Mammary epithelial cell (primary cell): ENCODE measurements at regions of chr2 and their contacts with region 1.

Region 1: DNA sequence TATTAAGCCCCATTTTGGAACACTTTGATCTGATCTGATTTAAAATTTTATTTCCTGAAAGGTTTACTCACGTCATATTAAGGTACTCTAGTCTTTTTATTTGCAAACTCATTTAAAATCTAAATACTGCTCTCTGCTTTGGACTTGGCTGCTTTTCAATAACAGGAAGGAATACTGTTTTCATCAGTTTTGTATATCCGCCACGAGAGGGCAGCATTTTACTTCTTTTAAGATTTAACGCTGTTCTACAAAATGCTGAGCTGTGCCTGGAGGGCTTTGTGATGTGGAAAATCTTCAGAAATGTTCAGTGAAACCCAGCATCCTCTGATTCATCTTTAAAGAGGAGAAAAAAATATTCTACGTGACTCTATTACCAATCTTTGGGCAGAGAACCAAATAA is 37.5 kb upstream of the SLC38A11 start:
- DNase-seq: peak; percentile 87
- H3K4me3 ChIP-seq: no peak overlapping the region
- H3K27ac ChIP-seq: peak overlapping the region; percentile 91
- H3K4me1 ChIP-seq: peaks cover 31% of the 10 kb centered on the region
- H3K27me3 ChIP-seq: no peaks in the 10 kb centered on the region
- CTCF ChIP-seq: peak; percentile 21 to 39

Region 2: GRCh38 chr2:164737612-164738081 is 255.2 kb before region 1 on chr2:
- CTCF ChIA-PET with region 1: no interaction called
- dilution Hi-C with region 1: no loop called
- in situ Hi-C with region 1: no loop called
- intact Hi-C with region 1: loop called (anchors 1 kb)
- DNase-seq: peak; percentile 65
- H3K4me3 ChIP-seq: no peak overlapping the region
- H3K27ac ChIP-seq: peak overlapping the region; percentile 24
- H3K4me1 ChIP-seq: peaks cover 34% of the 10 kb centered on the region
- H3K27me3 ChIP-seq: no peaks in the 10 kb centered on the region
- CTCF ChIP-seq: peak; percentile 68 to 69

Region 3: DNA sequence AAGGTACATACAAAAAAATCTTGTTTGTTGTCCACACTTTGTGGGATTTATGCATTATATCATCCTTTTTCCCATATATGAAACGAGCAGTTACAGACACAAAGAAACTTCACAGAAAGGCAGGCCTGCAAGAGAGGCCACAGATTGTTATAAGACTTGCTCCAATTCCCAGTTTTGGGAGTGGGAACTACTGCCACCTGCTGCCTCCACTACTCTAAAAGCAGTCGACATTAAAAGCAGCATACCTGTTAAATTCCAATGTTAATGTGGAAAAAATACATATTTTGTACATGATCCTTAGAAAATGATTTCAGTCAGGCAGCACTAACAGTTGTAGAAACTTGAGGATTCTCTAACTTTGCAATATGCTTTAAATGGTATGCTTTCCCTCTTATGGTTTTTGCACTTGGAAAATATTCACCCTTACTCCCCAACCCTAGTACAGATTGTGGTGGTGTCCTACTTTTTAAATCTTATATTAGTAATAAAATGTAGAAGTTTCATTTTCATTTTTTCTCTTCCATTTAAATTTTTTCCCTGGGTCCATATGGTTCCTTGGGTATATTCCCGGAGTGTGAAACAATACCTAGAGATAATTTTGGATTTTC is 75.4 kb before region 1 on chr2:
- CTCF ChIA-PET with region 1: interaction called, 3 read pairs
- dilution Hi-C with region 1: no loop called
- in situ Hi-C with region 1: no loop called
- intact Hi-C with region 1: loop called (anchors 1 kb)
- DNase-seq: peak; percentile 49
- H3K4me3 ChIP-seq: no peak overlapping the region
- H3K27ac ChIP-seq: no peak overlapping the region
- H3K4me1 ChIP-seq: peaks cover 22% of the 10 kb centered on the region
- H3K27me3 ChIP-seq: no peaks in the 10 kb centered on the region
- CTCF ChIP-seq: peak; percentile 44 to 79

Region 4: GRCh38 chr2:165203689-165204559 is 211.1 kb after region 1 on chr2 and contains the start of gene SCN3A:
- CTCF ChIA-PET with region 1: interaction called, 32 read pairs
- dilution Hi-C with region 1: no loop called
- in situ Hi-C with region 1: no loop called
- intact Hi-C with region 1: loop called (anchors 1 kb)
- DNase-seq: peak; percentile 37
- H3K4me3 ChIP-seq: no peak within 1 kb of the TSS
- H3K27ac ChIP-seq: no peak within 1 kb of the TSS
- H3K4me1 ChIP-seq: peaks cover 2% of the 10 kb centered on the region
- H3K27me3 ChIP-seq: no peaks in the 10 kb centered on the region
- CTCF ChIP-seq: peak; percentile 73 to 80
- total RNA-seq, gene SCN3A: not detected

Region 5: DNA sequence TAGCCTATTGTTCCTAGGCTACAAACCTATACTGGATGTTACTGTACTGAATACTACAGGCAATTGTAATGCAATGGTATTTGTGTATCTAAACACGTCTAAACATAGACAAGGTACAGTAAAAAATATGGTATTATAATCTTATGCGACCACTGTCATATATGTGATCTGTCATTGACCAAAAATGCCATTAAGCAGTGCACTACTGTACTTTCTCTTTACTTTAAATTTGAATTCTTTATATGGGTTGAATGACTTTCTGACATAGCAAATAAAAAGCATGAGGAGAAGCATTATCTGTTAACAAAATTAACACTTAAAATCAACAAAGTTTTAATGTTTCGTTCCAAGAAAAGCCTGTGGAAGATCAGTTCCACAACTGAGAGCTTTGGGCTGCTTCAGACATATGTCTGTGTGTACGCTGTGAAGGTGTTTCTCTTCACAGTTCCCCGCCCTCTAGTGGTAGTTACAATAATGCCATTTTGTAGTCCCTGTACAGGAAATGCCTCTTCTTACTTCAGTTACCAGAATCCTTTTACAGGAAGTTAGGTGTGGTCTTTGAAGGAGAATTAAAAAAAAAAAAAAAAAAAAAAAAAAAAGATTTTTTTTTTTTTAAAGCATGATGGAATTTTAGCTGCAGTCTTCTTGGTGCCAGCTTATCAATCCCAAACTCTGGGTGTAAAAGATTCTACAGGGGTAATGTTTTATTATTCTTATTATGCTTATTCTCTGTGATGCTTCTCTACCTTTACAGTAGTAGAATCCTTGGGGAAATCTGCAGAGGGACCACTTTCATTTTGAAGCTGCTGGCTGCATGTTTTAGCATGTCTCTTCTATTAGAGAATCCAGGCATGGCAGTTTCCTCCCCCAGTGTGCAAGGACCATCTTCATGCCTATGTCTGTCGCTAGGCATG is 300.9 kb after region 1 on chr2:
- CTCF ChIA-PET with region 1: no interaction called
- dilution Hi-C with region 1: no loop called
- in situ Hi-C with region 1: no loop called
- intact Hi-C with region 1: loop called (anchors 1 kb)
- DNase-seq: peak; percentile 88
- H3K4me3 ChIP-seq: peak overlapping the region; percentile 62 to 95 (median 93)
- H3K27ac ChIP-seq: no peak overlapping the region
- H3K4me1 ChIP-seq: peaks cover 6% of the 10 kb centered on the region
- H3K27me3 ChIP-seq: no peaks in the 10 kb centered on the region
- CTCF ChIP-seq: peak; percentile 84 to 96

Region 6: DNA sequence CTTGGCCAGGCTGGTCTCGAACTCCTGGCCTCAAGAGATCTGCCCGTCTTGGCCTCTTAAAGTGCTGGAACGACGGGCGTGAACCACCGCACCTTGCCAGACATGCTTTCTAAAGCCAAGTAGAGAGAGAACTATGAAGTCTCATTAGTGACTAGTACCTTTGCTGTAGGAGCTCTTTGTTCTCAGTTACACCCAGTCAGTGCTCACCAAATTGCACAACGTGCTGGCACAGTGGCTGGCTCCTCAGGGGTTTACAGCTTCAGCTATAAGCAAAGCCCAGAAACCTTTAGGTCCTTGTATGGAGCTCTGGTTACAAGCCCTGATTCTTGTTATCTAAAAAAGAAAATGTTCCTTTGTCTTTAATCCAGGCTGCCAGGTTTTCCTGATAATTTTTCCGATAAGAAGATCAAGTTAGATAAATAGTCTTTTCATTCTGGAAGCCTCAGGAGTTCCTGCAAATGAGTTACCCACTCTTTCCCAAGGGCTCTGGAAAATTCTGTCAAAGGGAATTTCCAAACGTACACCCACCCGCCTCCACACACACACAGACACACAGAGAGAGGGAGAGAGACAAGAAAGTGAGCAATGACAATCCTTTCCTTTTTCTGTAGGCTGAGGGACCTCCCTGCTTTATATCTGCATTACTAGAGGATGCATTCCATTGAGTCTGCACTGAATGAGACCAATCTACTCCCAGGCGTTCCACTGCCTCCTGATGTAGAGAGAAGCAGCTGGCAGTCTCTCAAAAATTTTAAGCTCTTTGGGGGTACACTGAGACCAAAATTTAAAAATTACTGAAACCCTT is 376.5 kb after region 1 on chr2:
- CTCF ChIA-PET with region 1: interaction called, 12 read pairs
- dilution Hi-C with region 1: no loop called
- in situ Hi-C with region 1: no loop called
- intact Hi-C with region 1: no loop called
- DNase-seq: peak; percentile 83
- H3K4me3 ChIP-seq: no peak overlapping the region
- H3K27ac ChIP-seq: peak overlapping the region; percentile 53
- H3K4me1 ChIP-seq: peaks cover 3% of the 10 kb centered on the region
- H3K27me3 ChIP-seq: no peaks in the 10 kb centered on the region
- CTCF ChIP-seq: no peak